ENCODE measurements at regions of chr15 and their contacts with region 1.

Region 1: GRCh38 chr15:65792130-65792987 is at the start of gene DENND4A:
- DNase-seq: peak; percentile 98
- H3K4me3 Mint-ChIP-seq: peak within 1 kb of the TSS; percentile 81
- H3K27ac Mint-ChIP-seq: peak within 1 kb of the TSS; percentile 94
- H3K4me1 Mint-ChIP-seq: peaks cover 33% of the 10 kb centered on the region
- H3K27me3 Mint-ChIP-seq: no peaks in the 10 kb centered on the region
- CTCF ChIP-seq: no peak
- total RNA-seq, gene DENND4A: 16.9 and 18.1 TPM in 2 replicates

Region 2: DNA sequence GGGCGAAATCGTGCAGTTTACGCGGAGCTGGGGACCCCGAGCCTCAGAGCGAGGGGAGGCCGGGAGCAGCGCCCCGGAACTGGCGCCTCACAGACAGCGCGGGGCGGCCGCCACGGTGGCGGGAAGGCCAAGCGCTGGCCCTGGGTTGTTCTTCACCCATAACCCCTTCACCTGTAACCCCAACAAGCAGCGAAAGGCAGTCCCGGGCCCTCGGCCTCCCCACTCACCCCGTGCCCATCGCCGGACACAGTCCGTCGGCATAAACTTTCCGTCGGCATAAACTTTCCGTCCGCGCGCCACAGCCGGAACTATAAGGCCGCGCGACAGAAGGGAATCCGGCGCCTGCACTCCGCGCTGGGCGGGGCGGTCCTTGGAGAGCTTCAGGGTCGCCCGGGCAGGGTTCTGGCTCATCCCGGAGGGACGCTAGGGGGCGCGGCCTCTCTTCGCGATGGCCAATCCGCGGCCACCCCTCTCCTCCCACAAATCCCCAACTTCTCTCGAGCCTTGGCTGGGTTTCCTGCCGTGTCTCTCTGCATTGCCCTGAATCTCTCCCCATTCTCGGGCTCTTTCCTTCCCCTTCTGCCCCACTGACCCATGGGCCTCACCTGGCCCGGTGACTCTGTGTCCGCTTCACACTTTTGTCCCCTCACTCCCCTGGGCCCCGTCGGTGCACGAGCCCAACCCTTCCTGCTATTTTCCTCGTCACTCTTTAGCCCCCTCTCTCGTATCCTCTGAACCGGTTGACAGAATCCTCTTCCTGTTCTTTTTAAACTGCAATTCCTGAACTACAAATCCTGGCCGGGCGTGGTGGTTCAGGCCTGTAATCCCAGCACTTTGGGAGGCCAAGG is 181.3 kb before region 1 on chr15 and contains the start of gene INTS14:
- CTCF ChIA-PET with region 1: no interaction called
- POLR2A ChIA-PET with region 1: interaction called, 22 read pairs
- intact Hi-C with region 1: no loop called
- DNase-seq: peak; percentile 96
- H3K4me3 Mint-ChIP-seq: peak within 1 kb of the TSS; percentile 89
- H3K27ac Mint-ChIP-seq: peak within 1 kb of the TSS; percentile 96
- H3K4me1 Mint-ChIP-seq: peaks cover 15% of the 10 kb centered on the region
- H3K27me3 Mint-ChIP-seq: no peaks in the 10 kb centered on the region
- CTCF ChIP-seq: peak; percentile 39
- total RNA-seq, gene INTS14: 43.9 and 47.0 TPM in 2 replicates

Region 3: DNA sequence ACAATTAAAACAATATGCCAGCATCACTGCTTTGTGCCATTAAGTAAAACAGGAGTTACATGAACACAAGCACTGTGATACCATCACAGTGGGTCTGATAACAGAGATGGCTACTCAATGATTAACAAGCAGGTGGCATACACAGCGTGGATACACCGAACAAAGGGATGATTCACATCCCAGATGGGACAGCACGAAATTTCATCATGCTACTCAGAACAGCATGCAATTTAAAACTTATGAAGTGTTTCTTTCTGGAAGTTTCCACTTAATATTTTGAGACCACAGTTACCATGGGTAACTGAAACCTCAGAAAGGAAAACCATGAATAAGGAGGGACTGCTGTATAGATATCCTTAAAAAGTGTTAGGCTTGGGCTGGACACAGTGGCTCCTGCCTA is 126.1 kb before region 1 on chr15:
- CTCF ChIA-PET with region 1: no interaction called
- POLR2A ChIA-PET with region 1: no interaction called
- intact Hi-C with region 1: no loop called
- DNase-seq: peak; percentile 66
- H3K4me3 Mint-ChIP-seq: no peak overlapping the region
- H3K27ac Mint-ChIP-seq: peak overlapping the region; percentile 91
- H3K4me1 Mint-ChIP-seq: no peaks in the 10 kb centered on the region
- H3K27me3 Mint-ChIP-seq: no peaks in the 10 kb centered on the region
- CTCF ChIP-seq: no peak

Region 4: GRCh38 chr15:65730549-65731172 is 61.7 kb before region 1 on chr15:
- CTCF ChIA-PET with region 1: interaction called, 4 read pairs
- POLR2A ChIA-PET with region 1: interaction called, 66 read pairs
- intact Hi-C with region 1: loop called (anchors 2 kb)
- DNase-seq: peak; percentile 66
- H3K4me3 Mint-ChIP-seq: peak overlapping the region; percentile 38
- H3K27ac Mint-ChIP-seq: peak overlapping the region; percentile 84
- H3K4me1 Mint-ChIP-seq: peaks cover 17% of the 10 kb centered on the region
- H3K27me3 Mint-ChIP-seq: no peaks in the 10 kb centered on the region
- CTCF ChIP-seq: no peak

Region 5: DNA sequence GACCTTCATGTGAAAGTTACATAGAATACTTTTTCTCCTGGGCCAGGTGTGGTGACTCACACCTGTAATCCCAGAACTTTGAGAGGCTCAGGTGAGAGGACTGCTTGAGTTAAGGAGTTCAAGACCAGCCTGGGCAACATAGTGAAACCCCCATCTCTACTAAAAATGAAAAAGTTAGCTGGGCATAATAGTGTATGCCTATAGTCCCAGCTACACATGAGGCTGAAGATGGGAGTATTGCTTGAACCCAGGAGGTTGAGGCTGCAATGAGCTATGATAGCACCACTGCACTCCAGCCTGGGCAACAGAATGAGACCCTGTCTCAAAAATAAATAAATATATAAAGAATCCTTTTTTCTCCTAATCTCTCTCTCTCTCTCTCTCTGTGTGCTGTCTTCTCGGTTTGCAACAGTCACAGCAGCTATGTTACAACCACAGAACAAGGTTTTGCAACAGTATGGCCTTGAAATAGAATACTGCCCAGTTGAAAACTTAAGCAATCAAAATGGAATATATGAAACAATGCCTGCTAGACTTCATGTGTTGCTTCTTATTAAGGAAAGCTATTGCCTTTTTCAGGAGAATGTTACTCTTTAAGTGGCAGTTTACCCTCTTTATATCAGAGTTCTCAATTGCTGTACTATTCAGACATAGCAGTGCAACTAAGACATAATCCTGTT is 12.0 kb after region 1 on chr15:
- CTCF ChIA-PET with region 1: no interaction called
- POLR2A ChIA-PET with region 1: interaction called, 36 read pairs
- intact Hi-C with region 1: no loop called
- DNase-seq: peak; percentile 38
- H3K4me3 Mint-ChIP-seq: no peak overlapping the region
- H3K27ac Mint-ChIP-seq: no peak overlapping the region
- H3K4me1 Mint-ChIP-seq: peaks cover 11% of the 10 kb centered on the region
- H3K27me3 Mint-ChIP-seq: no peaks in the 10 kb centered on the region
- CTCF ChIP-seq: no peak

Region 6: DNA sequence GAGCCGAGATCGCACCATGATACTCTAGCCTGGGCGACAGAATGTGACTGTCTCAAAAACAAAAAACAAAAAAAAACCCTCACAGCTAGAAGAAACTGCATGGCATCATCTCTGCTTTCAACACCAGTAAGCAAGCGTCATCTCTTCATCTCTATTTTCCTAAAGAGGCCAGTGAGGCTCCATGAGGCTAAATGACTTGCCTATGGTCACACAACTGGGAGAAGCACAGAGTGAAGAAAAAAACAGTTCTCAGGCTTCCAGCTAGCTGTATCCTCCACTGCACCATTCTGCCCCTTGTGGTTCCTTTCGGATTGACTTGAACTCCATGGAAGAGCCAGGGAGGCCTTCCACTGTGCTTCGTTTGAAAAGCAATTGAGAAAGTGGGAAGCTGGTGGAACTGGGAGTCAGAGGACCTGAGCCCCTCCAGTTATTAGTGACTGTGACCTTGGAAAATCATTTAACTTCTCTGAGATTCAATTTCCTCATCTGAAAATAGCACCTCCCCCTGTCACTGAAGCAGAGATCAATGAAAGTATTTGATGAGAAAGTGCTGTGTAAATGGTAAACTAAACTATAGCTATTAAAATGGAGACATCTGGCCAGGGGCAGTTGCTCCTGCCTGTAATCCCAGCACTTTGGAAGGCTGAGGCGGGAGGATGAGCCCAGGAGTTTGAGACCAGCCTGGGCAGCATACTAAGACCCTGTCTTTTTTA is 31.8 kb after region 1 on chr15:
- CTCF ChIA-PET with region 1: interaction called, 7 read pairs
- POLR2A ChIA-PET with region 1: interaction called, 23 read pairs
- intact Hi-C with region 1: loop called (anchors 5 kb)
- DNase-seq: peak; percentile 76
- H3K4me3 Mint-ChIP-seq: no peak overlapping the region
- H3K27ac Mint-ChIP-seq: no peak overlapping the region
- H3K4me1 Mint-ChIP-seq: peaks cover 4% of the 10 kb centered on the region
- H3K27me3 Mint-ChIP-seq: no peaks in the 10 kb centered on the region
- CTCF ChIP-seq: peak; percentile 31

Region 7: DNA sequence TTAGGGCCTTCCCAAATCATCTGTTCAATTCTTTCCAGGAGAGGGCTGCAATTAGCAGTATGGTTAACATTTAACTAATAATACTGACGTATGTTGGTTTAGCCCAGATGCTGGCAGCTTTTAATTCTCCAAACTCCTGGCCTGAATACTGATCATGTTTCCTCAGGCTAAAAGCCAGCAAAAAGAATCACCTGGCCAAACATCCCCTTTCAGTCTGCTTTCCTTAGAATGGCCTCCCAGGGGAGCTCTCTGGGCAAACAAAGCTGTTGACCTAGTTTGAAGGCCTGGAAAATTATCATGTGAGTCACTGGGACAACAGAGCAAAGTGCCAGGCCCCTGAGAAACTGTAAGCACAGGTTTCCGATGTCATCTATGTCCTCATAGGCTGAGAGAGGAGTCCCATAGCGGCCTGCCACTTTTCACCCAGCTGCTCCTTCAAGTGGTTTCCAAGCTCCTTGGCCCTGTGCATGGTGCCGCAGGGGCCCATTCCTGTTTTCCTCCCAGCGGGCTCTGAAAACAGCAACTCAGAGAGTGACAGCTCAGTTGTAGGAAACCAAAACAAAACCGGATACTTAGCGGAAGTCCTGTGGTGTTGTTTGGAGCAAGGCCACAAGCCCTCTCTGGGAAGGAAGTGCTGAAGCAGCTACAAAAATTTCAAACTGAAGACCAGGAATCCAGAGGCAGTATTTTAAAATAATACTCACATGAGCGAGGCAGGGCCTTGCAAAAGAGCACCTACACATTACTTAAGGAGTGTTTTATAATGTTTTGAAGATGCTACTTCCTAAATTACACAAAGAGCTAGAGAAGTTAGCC is 40.4 kb after region 1 on chr15:
- CTCF ChIA-PET with region 1: interaction called, 6 read pairs
- POLR2A ChIA-PET with region 1: interaction called, 11 read pairs
- intact Hi-C with region 1: loop called (anchors 5 kb)
- DNase-seq: peak; percentile 97
- H3K4me3 Mint-ChIP-seq: no peak overlapping the region
- H3K27ac Mint-ChIP-seq: peak overlapping the region; percentile 73
- H3K4me1 Mint-ChIP-seq: peaks cover 14% of the 10 kb centered on the region
- H3K27me3 Mint-ChIP-seq: no peaks in the 10 kb centered on the region
- CTCF ChIP-seq: no peak

Region 8: DNA sequence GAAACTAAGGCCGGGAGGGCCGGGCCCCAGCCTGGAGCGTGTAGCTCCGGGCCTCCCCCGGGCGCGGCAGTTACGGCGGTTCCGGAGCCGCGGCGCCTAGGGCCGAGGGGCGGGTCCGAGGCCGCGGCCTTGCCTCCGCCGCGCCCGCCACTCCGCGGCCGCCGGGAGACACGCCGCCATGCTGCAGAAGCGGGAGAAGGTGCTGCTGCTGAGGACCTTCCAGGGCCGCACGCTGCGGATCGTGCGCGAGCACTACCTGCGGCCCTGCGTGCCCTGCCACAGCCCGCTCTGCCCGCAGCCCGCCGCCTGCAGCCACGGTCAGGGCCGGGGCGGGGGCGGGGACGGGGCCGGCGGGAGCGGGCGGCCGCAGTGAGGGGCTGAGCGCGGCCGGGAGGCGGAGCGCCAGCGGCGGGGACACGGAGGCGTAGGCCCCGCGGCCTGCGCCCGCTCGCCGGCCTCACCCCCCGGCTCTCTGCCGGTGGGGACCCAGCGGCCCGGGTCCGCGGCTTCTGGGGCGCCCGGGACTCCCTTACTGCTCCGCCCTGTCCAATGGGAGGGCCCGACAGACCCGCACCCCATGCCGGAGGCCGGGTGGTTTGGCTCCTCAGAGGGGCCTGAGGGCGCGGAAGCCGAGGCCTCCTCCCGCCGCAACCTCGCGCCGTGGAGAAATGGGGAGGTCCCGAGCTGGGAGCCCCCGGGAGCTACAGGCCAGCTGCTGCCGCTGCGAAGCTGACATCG is 501.2 kb after region 1 on chr15 and contains the start of gene DIS3L:
- CTCF ChIA-PET with region 1: no interaction called
- POLR2A ChIA-PET with region 1: interaction called, 12 read pairs
- intact Hi-C with region 1: no loop called
- DNase-seq: peak; percentile 70
- H3K4me3 Mint-ChIP-seq: peak within 1 kb of the TSS; percentile 83
- H3K27ac Mint-ChIP-seq: peak within 1 kb of the TSS; percentile 75
- H3K4me1 Mint-ChIP-seq: peaks cover 11% of the 10 kb centered on the region
- H3K27me3 Mint-ChIP-seq: no peaks in the 10 kb centered on the region
- CTCF ChIP-seq: no peak
- total RNA-seq, gene DIS3L: 35.6 and 42.8 TPM in 2 replicates